Activated naive CD4-positive, alpha-beta T cell treated with anti-CD3 and anti-CD28 coated beads for 36 hours (primary cell): ENCODE measurements at regions of chr3 and their contacts with region 1.

Region 1: DNA sequence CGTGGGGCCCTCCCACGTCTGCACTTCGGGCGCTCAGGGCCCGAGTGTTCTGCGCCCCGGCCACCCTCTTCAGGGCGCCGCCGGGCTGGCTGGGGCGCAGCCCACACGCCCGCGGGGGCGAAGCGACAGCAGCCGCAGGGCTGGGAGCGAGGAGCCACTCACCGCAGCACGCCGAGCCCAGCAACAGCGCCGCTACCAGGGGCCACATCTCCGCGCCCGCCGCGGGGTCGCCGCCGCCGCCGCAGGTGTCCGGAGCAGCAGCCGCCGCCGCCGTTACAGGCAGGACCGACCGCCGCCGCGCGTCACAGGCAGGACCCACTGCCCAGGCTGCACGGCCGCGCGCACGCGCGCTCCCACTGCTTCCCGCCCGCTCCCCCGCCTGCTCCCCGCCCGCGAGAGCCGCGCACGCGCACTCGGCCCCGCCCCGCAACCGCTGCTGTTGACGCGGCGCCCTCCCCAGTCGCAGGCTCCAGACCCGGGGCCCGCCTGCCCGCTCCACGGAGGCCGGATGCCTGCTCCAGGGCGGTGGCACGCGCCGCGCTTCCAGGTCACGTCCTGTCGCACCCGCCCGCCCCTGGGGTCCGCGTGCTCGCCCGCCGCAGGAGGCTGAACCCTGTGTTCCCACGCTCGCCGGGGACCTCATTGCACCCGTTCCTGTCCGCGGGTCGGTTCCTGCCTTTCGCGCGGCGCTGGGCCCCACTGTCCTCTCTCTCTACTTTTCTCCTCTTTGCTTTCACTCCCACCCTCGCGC is at the start of gene CD47:
- DNase-seq: peak; percentile 94
- H3K4me3 Mint-ChIP-seq: peak within 1 kb of the TSS; percentile 97
- H3K27ac Mint-ChIP-seq: peak within 1 kb of the TSS; percentile 98
- H3K4me1 Mint-ChIP-seq: peaks cover 25% of the 10 kb centered on the region
- H3K27me3 Mint-ChIP-seq: no peaks in the 10 kb centered on the region
- total RNA-seq, gene CD47: 60.2 to 63.7 TPM

Region 2: GRCh38 chr3:107598926-107599771 is 491.7 kb before region 1 on chr3:
- CTCF ChIA-PET with region 1: no interaction called
- intact Hi-C with region 1: loop called (anchors 2 kb)
- DNase-seq: peak; percentile 61
- H3K4me3 Mint-ChIP-seq: peak overlapping the region; percentile 79
- H3K27ac Mint-ChIP-seq: peak overlapping the region; percentile 85
- H3K4me1 Mint-ChIP-seq: peaks cover 50% of the 10 kb centered on the region
- H3K27me3 Mint-ChIP-seq: no peaks in the 10 kb centered on the region

Region 3: DNA sequence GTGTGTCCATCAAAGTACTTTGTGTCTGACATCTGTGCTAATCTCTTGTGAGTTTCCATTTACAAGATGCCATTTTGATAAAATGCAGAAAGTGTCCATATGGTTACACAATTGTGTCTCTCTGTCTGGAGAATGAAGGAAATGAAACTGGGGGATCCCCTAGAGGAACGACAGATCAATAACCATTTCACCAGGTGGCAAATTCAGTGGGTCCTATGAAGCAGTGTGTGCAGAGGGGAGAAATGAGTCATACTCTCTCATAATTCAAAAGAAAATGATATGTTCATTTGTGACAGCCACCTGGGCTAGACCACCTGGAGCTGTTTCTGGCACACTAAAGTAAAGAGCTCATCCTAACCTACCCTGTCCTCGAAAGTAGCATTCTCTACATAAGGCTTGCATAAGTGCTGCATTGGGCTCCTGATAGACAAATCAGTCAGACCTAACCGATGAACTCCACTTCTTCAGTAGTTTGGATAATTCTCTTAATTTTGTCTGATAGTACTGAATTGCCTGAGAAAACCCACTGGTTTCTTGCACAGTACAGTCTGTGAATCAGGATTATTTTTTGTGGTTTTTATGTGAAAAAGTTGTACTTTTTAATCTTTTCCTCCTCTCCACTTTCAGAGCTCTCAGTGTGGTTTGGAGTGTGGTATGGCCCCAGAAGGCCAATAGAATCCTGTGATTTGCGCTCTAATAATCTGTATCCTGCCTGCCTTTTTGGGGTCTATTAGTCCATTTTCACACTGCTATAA is 10.2 kb after region 1 on chr3:
- CTCF ChIA-PET with region 1: interaction called, 7 read pairs
- intact Hi-C with region 1: loop called (anchors 1 kb)
- DNase-seq: peak; percentile 59
- H3K4me3 Mint-ChIP-seq: peak overlapping the region; percentile 12
- H3K27ac Mint-ChIP-seq: no peak overlapping the region
- H3K4me1 Mint-ChIP-seq: peaks cover 43% of the 10 kb centered on the region
- H3K27me3 Mint-ChIP-seq: no peaks in the 10 kb centered on the region

Region 4: DNA sequence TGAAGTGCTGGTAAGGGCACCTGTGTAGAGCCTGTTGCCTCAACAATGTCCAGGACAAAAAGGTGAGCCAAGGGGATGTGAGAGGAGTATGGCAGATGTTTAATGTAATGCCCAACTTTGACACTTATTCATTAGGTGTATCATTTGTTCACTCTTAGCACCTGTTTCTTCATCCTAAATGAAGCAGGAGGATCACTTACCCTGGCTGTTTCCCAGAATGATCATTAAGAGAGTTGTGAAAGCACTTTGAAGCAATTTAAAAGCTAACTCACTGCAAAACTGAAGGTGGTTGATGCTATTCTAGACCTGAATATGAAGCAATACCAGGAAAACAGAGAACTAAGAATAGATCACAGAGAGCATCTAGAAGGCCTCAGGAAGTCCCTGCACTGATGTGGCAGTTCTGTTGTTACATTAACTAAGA is 202.0 kb after region 1 on chr3:
- CTCF ChIA-PET with region 1: interaction called, 3 read pairs
- intact Hi-C with region 1: loop called (anchors 1 kb)
- DNase-seq: peak; percentile 45
- H3K4me3 Mint-ChIP-seq: no peak overlapping the region
- H3K27ac Mint-ChIP-seq: peak overlapping the region; percentile 70
- H3K4me1 Mint-ChIP-seq: peaks cover 55% of the 10 kb centered on the region
- H3K27me3 Mint-ChIP-seq: no peaks in the 10 kb centered on the region

Region 5: DNA sequence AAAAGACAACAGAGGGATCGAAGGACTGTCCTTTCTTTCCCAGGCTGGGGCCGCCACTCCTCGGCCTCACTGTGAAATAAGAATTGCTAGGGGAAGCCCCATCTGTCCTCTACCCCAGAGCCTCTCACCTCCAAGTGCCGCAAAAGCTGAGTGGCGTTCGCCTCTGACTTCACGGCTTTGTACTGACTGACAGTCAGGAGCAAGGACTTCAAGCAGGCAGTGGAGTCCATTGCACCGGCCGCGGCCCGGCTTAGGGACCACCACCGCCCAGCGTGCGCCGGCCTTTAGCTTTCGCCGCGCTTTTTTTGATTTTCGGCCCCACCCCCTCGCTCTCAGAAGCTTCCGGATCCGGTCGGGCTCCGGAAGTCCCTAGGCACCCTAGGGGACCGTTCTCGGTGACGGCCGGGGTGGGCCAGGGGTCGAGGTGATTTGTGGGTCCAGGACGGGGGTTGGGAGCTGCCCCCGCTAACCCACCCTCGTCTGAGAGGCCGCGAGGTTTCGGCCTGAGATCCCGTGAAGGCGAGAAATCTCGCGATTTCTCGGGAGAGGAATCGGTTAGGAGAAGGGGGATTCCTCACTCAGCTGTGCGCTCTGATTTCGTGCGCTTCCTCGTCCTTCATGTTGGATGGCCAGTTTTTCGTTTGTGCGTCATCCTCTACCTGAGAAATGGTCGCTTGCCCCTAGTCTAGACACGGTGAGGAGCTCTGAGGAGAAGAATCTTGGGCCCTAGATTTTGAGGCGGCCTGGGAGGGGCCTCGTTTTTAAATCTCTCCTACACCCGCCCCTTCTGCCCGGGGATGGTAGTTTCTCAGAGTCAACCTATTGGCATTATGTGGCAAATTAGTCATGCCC is 498.5 kb after region 1 on chr3 and contains the starts of genes CIP2A and DZIP3:
- CTCF ChIA-PET with region 1: no interaction called
- intact Hi-C with region 1: loop called (anchors 2 kb)
- DNase-seq: peak; percentile 84
- H3K4me3 Mint-ChIP-seq: peak within 1 kb of the TSS; percentile 95
- H3K27ac Mint-ChIP-seq: peak within 1 kb of the TSS; percentile 99
- H3K4me1 Mint-ChIP-seq: peaks cover 36% of the 10 kb centered on the region
- H3K27me3 Mint-ChIP-seq: no peaks in the 10 kb centered on the region
- total RNA-seq, gene CIP2A: 34.7 to 39.9 TPM
- total RNA-seq, gene DZIP3: 11.2 to 12.2 TPM